Activated naive CD4-positive, alpha-beta T cell treated with anti-CD3 and anti-CD28 coated beads for 36 hours (primary cell): ENCODE measurements at regions of chr12 and their contacts with region 1.

Region 1: DNA sequence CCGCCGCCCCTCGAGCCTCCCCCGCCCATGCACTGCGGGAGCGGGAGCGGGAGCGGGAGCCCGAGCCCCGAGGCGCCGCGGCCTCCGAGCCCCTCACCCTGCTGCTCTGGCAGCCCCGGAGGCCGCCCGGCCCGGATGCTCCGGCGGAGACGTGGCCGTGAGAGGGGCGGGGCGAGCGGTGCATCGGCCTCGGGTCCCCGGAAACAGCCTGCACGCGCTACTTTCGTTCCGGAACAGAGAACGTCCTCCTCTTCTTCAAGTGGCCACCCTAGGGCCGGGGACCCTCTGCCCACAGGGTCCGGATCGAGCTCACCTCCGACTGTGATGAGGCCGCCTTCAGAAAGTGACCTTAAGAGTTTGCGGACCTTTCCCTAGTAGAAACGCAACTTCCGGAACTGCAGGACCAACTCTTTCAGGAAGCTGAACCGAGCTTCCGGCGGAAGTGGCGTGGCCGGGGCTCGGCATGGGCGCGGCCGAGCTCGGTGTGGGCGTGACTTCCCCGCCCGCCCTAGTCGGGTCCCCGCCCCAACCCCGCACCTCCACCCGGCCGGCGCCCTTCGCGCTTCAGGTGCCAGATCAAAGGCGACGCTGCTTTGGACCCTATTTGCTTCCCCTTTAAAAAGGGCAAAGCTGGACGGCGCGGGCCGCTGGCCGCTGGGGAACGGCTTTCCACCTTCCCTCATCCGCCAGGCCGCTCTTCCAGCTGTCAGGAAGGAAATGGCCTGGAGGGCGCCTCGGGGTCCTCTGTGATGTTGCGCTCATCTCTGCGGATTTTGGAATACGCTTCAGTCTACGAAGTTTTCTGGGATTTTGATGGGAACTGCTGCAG is at the start of gene GOLGA3:
- DNase-seq: peak; percentile 95
- H3K4me3 Mint-ChIP-seq: peak within 1 kb of the TSS; percentile 98
- H3K27ac Mint-ChIP-seq: peak within 1 kb of the TSS; percentile 100
- H3K4me1 Mint-ChIP-seq: peaks cover 49% of the 10 kb centered on the region
- H3K27me3 Mint-ChIP-seq: no peaks in the 10 kb centered on the region
- total RNA-seq, gene GOLGA3: 25.2 to 29.1 TPM

Region 2: GRCh38 chr12:132523576-132524331 is 305.2 kb before region 1 on chr12:
- CTCF ChIA-PET with region 1: no interaction called
- intact Hi-C with region 1: no loop called
- DNase-seq: peak; percentile 83
- H3K4me3 Mint-ChIP-seq: no peak overlapping the region
- H3K27ac Mint-ChIP-seq: no peak overlapping the region
- H3K4me1 Mint-ChIP-seq: peaks cover 9% of the 10 kb centered on the region
- H3K27me3 Mint-ChIP-seq: no peaks in the 10 kb centered on the region

Region 3: DNA sequence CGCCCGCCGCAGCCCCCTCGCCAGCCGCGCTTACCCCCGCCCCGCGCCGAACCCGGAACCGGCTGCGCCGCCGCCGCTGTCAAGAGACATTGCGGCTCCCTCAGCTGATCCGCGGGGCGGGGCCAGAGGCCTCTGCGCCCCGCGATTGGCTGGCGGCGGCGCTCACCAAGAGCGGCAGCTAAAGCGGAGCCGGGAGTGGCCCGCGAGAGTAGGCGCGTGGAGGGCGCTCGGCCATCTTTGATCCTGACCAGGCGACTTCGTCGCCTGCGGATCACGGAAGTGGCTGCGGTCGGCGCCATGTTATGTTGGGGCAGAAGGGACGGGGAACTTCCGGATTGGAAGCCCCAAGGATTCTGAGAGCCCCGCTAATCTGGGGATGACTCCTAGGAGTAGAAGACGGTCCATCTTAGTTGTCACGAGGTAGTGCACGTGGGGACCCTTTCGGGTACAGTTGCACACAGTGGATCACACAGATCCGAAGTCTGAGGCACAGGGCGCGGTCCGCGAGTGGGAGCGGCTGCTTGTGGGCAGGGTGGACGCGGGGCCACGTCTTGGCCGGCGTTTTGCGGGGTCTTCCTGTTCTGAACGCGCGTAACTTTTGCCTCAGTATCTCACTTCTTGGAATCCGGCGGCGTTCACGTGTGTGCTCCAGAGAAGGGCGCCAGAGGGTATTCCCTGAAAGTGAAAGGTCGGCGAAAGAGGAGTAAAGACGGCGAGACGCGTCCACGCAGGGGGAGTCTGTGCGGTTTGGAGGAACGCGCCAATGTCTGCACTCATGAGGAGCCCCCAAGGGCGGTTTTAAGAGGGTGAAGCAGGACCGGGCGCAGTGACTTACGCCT is 58.8 kb after region 1 on chr12 and contains the start of gene CHFR:
- CTCF ChIA-PET with region 1: no interaction called
- intact Hi-C with region 1: loop called (anchors 2 kb)
- DNase-seq: peak; percentile 97
- H3K4me3 Mint-ChIP-seq: peak within 1 kb of the TSS; percentile 98
- H3K27ac Mint-ChIP-seq: peak within 1 kb of the TSS; percentile 99
- H3K4me1 Mint-ChIP-seq: peaks cover 32% of the 10 kb centered on the region
- H3K27me3 Mint-ChIP-seq: no peaks in the 10 kb centered on the region
- total RNA-seq, gene CHFR: 27.2 to 32.8 TPM